ENCODE measurements at regions of chr7 and their contacts with region 1.

Region 1: DNA sequence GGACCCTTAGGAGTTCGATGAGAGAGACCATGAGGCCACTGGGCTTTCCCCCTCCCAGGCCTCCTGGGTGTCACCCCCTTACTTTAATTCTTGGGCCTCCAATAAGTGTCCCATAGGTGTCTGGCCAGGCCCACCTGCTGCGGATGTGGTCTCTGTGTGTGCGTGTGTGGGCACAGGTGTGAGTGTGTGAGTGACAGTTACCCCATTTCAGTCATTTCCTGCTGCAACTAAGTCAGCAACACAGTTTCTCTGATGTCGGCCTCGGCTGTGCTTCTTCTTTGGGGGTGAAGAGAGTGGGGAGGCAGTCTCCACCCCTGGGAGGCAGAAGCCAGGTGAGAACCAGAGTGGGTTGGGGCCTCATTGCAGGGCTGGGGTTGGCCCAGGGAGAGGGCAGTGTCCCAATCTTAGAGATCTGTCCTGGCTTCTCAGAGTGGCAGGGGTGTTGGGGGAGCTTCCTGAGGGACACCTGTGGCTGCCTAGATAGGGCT is 1.5 kb downstream of the PVRIG start:
- DNase-seq: peak; percentile 90
- H3K4me3 Mint-ChIP-seq: peak overlapping the region; percentile 92
- H3K27ac Mint-ChIP-seq: peak overlapping the region; percentile 98
- H3K4me1 Mint-ChIP-seq: peaks cover 56% of the 10 kb centered on the region
- H3K27me3 Mint-ChIP-seq: no peaks in the 10 kb centered on the region

Region 2: GRCh38 chr7:100132697-100133151 is 88.6 kb before region 1 on chr7:
- CTCF ChIA-PET with region 1: interaction called, 43 read pairs
- POLR2A ChIA-PET with region 1: no interaction called
- intact Hi-C with region 1: loop called (anchors 2 kb)
- DNase-seq: peak; percentile 79
- H3K4me3 Mint-ChIP-seq: no peak overlapping the region
- H3K27ac Mint-ChIP-seq: no peak overlapping the region
- H3K4me1 Mint-ChIP-seq: peaks cover 14% of the 10 kb centered on the region
- H3K27me3 Mint-ChIP-seq: no peaks in the 10 kb centered on the region

Region 3: DNA sequence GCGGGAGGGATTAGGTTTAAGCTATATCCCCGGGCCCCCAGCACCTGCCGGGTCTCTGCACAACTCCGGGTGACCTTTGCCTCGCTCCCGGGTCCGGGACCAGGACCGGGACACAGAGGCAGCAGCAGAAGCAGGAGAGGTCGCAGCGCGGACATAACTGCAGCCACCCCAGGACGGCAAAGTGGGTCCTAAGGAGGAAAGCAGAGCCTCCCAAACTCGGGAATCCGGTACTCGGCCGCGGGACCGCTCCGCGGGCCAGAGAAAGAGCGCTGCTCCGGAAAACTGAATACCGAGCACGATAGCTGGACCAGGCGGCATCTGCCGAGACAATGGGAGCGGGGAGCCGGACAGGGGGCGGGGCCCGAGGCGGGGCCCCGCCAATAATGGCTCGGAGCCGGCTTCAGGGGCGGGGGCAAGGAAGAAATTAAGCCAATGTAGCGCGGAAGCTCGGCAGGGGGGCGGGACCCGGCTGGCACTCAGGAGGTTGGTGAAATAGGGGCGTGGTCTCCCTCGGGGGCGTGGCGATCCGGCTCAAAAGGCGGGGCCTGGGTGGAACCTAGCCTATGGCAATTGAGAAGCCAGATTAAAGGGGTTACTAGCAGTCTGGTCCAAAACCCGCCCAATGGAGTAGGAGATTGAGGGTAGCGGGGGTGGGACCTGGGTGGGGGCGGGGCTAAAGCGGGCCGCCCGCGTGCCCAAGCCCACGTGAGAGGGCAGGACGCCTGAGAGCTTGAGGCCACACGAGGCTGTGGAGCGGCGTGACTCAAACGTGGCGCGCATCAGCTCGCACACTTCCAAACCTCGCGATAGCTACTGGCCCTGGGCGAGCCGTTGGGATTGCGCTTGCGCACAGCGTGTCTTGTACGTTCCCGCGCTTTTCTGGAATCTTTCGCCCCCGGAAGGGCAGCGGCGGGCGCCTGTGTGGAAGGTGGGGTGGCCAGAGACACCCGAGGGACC is 44.0 kb before region 1 on chr7 and contains the starts of genes GPC2 and STAG3:
- CTCF ChIA-PET with region 1: interaction called, 4 read pairs
- POLR2A ChIA-PET with region 1: no interaction called
- intact Hi-C with region 1: loop called (anchors 5 kb)
- DNase-seq: peak; percentile 99
- H3K4me3 Mint-ChIP-seq: peak within 1 kb of the TSS; percentile 74
- H3K27ac Mint-ChIP-seq: no peak within 1 kb of the TSS
- H3K4me1 Mint-ChIP-seq: peaks cover 34% of the 10 kb centered on the region
- H3K27me3 Mint-ChIP-seq: no peaks in the 10 kb centered on the region
- total RNA-seq, gene GPC2: 4.8 to 5.5 TPM
- total RNA-seq, gene STAG3: 20.8 to 20.9 TPM

Region 4: GRCh38 chr7:100208911-100209408 is 12.3 kb before region 1 on chr7:
- CTCF ChIA-PET with region 1: interaction called, 4 read pairs
- POLR2A ChIA-PET with region 1: interaction called, 4 read pairs
- intact Hi-C with region 1: loop called (anchors 1 kb)
- DNase-seq: peak; percentile 80
- H3K4me3 Mint-ChIP-seq: peak overlapping the region; percentile 58
- H3K27ac Mint-ChIP-seq: peak overlapping the region; percentile 76
- H3K4me1 Mint-ChIP-seq: peaks cover 43% of the 10 kb centered on the region
- H3K27me3 Mint-ChIP-seq: no peaks in the 10 kb centered on the region

Region 5: GRCh38 chr7:100271716-100272537 is 50.7 kb after region 1 on chr7:
- CTCF ChIA-PET with region 1: interaction called, 5 read pairs
- POLR2A ChIA-PET with region 1: interaction called, 3 read pairs
- intact Hi-C with region 1: loop called (anchors 5 kb)
- DNase-seq: peak; percentile 98
- H3K4me3 Mint-ChIP-seq: peak overlapping the region; percentile 71
- H3K27ac Mint-ChIP-seq: peak overlapping the region; percentile 38
- H3K4me1 Mint-ChIP-seq: peaks cover 8% of the 10 kb centered on the region
- H3K27me3 Mint-ChIP-seq: no peaks in the 10 kb centered on the region

Region 6: DNA sequence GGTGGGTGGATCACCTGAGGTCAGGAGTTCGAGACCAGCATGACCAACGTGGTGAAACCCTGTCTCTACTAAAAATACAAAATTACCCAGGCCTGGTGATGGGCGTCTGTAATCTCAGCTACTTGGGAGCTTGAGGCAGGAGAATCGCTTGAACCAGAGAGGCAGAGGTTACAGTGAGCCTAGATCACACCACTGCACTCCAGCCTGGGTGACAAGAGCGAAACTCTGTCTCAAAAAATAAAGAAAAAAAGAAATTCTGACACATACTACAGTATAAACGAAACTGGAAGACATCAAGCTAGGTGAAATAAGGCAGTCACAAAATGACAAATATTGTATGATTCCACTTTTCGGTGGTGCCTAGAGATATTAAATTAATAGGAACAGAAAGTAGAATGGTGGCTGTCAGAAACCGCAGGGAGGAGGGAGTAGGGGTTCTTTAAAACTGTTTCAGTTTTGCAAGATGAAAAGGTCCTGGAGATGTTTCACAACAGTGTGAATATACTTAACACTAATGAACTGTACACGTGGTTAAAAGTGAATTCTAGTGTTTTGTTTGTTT is 175.2 kb after region 1 on chr7:
- CTCF ChIA-PET with region 1: no interaction called
- POLR2A ChIA-PET with region 1: no interaction called
- intact Hi-C with region 1: loop called (anchors 2 kb)
- DNase-seq: peak; percentile 78
- H3K4me3 Mint-ChIP-seq: no peak overlapping the region
- H3K27ac Mint-ChIP-seq: no peak overlapping the region
- H3K4me1 Mint-ChIP-seq: peaks cover 26% of the 10 kb centered on the region
- H3K27me3 Mint-ChIP-seq: peaks cover 24% of the 10 kb centered on the region

Measured in activated CD4-positive, alpha-beta memory T cell treated with anti-CD3 and anti-CD28 coated beads for 36 hours (primary cell).